ENCODE measurements at regions of chr5 and their contacts with region 1.

Region 1: DNA sequence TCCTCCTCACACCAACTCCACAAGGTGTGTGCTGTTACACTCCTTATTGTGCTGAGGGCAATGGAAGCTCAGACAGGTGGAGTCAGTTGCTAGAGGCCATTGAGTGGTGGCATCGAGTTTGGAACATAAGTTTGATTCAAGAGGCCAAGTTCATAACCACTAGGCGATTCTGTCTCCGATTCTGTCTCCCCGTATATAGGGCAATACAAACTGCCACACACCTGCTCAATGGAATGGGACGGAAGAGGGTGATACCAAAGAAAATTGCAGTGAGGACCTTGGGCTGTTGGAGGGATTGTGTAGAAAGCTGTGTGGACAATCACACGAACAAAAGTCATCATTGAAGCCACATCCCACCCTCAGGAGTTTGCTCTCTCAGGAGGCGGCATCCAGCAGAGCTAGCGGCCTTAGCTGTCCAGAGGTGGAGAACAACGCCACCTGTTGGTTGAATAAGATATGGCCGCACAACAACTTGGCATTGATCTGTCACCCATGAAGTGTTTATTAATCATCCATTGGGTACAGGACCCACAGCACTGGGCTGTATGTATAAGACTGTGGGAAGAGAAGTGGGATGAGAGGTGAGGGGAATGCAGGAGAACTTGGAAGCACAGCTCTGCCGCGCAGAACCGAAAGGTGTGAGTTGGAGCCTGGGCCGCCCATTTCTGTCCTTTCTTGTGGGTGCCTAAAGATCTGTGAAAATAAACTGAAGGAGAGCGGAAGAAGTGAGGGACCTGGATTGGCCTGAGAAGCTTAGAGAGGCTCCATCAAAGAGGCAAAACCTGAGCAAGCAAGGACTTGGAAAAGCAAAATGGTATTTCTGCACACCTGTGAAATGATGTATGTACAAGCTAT is 16.1 kb upstream of the NEUROG1 start:
- H3K4me3 ChIP-seq: no peak overlapping the region
- H3K27ac ChIP-seq: no peak overlapping the region
- H3K4me1 ChIP-seq: no peaks in the 10 kb centered on the region
- CTCF ChIP-seq: peak; percentile 74

Region 2: GRCh38 chr5:135476615-135477582 is 74.9 kb before region 1 on chr5:
- CTCF ChIA-PET with region 1: interaction called, 31 read pairs
- POLR2A ChIA-PET with region 1: no interaction called
- H3K4me3 ChIP-seq: no peak overlapping the region
- H3K27ac ChIP-seq: no peak overlapping the region
- H3K4me1 ChIP-seq: peaks cover 5% of the 10 kb centered on the region; the same call in 1 of the 2 replicates
- CTCF ChIP-seq: no peak

Region 3: GRCh38 chr5:135488727-135489465 is 62.9 kb before region 1 on chr5:
- CTCF ChIA-PET with region 1: interaction called, 24 read pairs
- POLR2A ChIA-PET with region 1: no interaction called
- H3K4me3 ChIP-seq: peak overlapping the region; percentile 6; the same call in 1 of the 2 replicates
- H3K27ac ChIP-seq: peak overlapping the region; percentile 43
- H3K4me1 ChIP-seq: peaks cover 18% of the 10 kb centered on the region
- CTCF ChIP-seq: peak; percentile 49

Region 4: GRCh38 chr5:135508482-135509005 is 43.3 kb before region 1 on chr5:
- CTCF ChIA-PET with region 1: interaction called, 17 read pairs
- POLR2A ChIA-PET with region 1: no interaction called
- H3K4me3 ChIP-seq: peak overlapping the region; percentile 34
- H3K27ac ChIP-seq: peak overlapping the region; percentile 82
- H3K4me1 ChIP-seq: peaks cover 13% of the 10 kb centered on the region
- CTCF ChIP-seq: no peak

Region 5: GRCh38 chr5:135535820-135536801 is 15.7 kb before region 1 on chr5 and contains the start of gene NEUROG1:
- CTCF ChIA-PET with region 1: interaction called, 29 read pairs
- POLR2A ChIA-PET with region 1: no interaction called
- H3K4me3 ChIP-seq: peak within 1 kb of the TSS; percentile 34
- H3K27ac ChIP-seq: peak within 1 kb of the TSS; percentile 57; the same call in 1 of the 2 replicates
- H3K4me1 ChIP-seq: no peaks in the 10 kb centered on the region
- CTCF ChIP-seq: no peak

Region 6: GRCh38 chr5:135729321-135729786 is 177.5 kb after region 1 on chr5:
- CTCF ChIA-PET with region 1: interaction called, 27 read pairs
- POLR2A ChIA-PET with region 1: no interaction called
- H3K4me3 ChIP-seq: no peak overlapping the region
- H3K27ac ChIP-seq: no peak overlapping the region
- H3K4me1 ChIP-seq: no peaks in the 10 kb centered on the region
- CTCF ChIP-seq: no peak

Region 7: GRCh38 chr5:135829681-135830383 is 278.0 kb after region 1 on chr5:
- CTCF ChIA-PET with region 1: interaction called, 43 read pairs
- POLR2A ChIA-PET with region 1: no interaction called
- H3K4me3 ChIP-seq: no peak overlapping the region
- H3K27ac ChIP-seq: no peak overlapping the region
- H3K4me1 ChIP-seq: no peaks in the 10 kb centered on the region
- CTCF ChIP-seq: peak; percentile 76